Posterior vena cava (tissue), 2 donors: ENCODE measurements at regions of chr2 and their contacts with region 1.

Region 1: GRCh38 chr2:237451643-237452469 is 35.2 kb upstream of the MLPH start:
- DNase-seq: no peak

Region 2: GRCh38 chr2:236073246-236073645 is 1378.6 kb before region 1 on chr2:
- intact Hi-C with region 1: no loop called
- DNase-seq: no peak

Region 3: DNA sequence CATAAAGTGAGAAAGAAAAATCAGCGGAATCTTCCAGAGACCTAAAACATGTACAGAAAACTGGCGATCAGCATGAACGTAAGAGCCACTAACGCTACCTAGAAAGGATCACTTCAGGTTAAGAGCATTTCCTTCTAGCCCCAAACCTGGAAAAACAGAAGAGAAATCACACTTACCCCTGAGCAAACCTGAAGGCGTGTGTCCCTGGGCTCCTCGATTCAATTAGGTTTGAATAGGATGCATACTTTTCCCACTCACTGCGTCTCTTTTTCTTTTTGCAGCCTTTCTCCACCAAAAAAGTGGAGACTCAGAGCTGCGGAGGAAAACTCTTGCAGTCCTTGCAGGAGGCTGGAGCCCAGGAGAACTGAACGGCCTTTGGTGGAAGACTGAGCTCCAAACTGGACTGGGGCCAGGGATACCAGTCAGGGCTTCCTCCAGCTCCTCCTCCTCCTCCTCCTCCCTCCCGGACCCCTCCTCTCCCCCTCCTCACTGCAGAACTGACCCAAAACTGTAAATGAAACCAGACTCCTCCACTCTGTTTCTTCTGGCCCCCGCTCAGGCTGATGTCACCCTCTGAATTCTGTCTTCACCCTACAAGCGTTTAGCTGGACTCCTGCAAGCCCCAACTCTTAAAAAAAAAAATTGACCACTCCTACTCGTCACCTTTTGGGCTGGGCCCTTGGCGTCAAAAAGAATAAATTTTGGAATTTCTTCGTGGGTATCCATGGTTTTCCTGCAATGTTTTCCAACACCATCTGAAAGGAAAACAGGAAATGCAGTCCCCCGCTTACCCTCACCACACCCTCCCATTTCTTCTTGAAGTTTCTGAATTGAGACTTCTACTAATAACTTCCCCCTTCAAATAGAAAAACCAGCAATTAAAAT is 37.8 kb before region 1 on chr2 and contains the start of gene COL6A3:
- intact Hi-C with region 1: loop called in 1 of 2 experiments (anchors 5 kb)
- DNase-seq: peak; percentile 90
- total RNA-seq, gene COL6A3: 485 to 835 TPM